Dorsolateral prefrontal cortex (tissue), 120 donors: ENCODE measurements at regions of chr6 and their contacts with region 1.

Region 1: GRCh38 chr6:110389689-110390382 is 25.5 kb downstream of the DDO start:
- DNase-seq: no peak
- H3K4me3 ChIP-seq: no peak overlapping the region
- H3K27ac ChIP-seq: peak overlapping the region in 7 of 59 donors; percentile 1 to 68 (median 47)
- H3K27me3 ChIP-seq: no peaks in the 10 kb centered on the region
- CTCF ChIP-seq: no peak

Region 2: DNA sequence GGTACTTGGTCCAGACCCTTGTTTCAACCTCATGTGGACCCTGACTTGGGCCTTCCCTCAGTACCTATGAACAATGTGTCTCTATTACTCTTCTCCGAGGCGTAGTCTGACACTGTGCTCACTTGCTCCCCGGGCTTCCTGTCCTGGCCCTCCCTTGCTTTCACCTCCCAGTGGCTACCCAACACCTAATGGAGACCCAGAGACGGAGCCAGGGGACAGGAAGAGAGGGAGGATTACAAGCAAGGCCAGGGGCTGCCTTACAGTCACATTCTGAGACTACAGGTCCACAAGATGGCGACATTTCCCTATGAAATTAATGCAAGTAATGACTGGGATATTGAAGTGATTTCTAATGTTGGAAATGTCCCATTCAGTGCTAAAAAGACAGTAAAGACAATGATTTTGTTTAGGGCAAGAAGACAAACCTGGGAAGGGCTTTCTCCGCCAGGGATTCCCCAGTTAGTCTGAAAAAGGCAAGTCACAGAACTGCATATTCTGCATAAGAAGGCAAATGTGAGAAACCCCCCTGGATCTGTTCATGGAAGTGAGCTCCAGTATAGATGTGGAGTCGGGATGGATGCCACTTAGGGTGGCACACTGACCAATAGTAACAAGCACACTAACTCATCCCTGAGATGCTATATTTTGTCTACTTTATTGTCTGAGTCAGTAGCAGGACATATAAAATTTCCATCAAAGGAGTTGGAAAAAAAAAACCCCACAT is 862.8 kb before region 1 on chr6:
- intact Hi-C with region 1: loop called in 1 of 2 experiments (anchors 5 kb)
- DNase-seq: peak in 4 of 10 donors; percentile 12 to 40 (median 18)
- H3K4me3 ChIP-seq: no peak overlapping the region
- H3K27ac ChIP-seq: no peak overlapping the region
- H3K27me3 ChIP-seq: no peaks in the 10 kb centered on the region
- CTCF ChIP-seq: peak in 54 of 56 donors; percentile 29 to 75 (median 60)

Region 3: GRCh38 chr6:109705258-109705657 is 684.6 kb before region 1 on chr6:
- intact Hi-C with region 1: loop called (anchors 5 kb)
- DNase-seq: peak; percentile 70 to 84 (median 80)
- H3K4me3 ChIP-seq: no peak overlapping the region
- H3K27ac ChIP-seq: peak overlapping the region in 14 of 59 donors; percentile 5 to 85 (median 34)
- H3K27me3 ChIP-seq: no peaks in the 10 kb centered on the region
- CTCF ChIP-seq: peak; percentile 98 to 100 (median 100)

Region 4: GRCh38 chr6:109783250-109783986 is 606.4 kb before region 1 on chr6:
- intact Hi-C with region 1: no loop called
- DNase-seq: no peak
- H3K4me3 ChIP-seq: no peak overlapping the region
- H3K27ac ChIP-seq: no peak overlapping the region
- H3K27me3 ChIP-seq: no peaks in the 10 kb centered on the region
- CTCF ChIP-seq: peak in 1 of 56 donors; percentile 6

Region 5: DNA sequence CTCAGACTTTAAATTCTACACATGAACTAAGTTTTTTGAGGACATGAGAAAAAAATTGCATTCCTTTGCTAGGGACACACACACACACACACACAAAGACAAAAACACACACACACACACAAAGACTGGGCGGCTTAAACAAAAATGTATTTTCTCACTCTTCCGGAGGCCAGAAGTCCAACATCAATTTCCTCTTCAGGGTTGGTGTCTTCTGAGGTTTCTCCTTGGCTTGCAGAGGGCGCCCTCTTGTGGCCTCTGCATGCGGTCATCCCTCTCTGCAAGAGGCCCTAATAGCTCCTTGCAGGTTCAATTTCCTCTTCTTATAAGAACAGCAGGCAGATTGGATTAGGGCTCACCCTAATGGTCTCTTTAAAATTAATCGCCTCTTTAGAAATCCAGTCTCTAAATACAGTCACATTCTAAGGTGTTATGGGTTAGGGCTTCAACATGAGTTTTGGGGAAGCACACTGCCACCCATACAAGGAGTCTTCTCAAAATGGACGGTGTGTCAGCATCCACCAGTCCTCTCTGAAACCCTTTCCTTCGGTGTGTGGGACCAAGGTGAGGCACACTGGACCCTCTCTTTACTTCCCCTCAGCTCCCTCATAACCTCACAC is 350.4 kb before region 1 on chr6:
- intact Hi-C with region 1: loop called in 1 of 2 experiments (anchors 5 kb)
- DNase-seq: peak; percentile 81 to 92 (median 86)
- H3K4me3 ChIP-seq: peak overlapping the region in 40 of 59 donors; percentile 2 to 53 (median 26)
- H3K27ac ChIP-seq: peak overlapping the region in 39 of 59 donors; percentile 3 to 80 (median 56)
- H3K27me3 ChIP-seq: no peaks in the 10 kb centered on the region
- CTCF ChIP-seq: peak; percentile 67 to 96 (median 90)

Region 6: DNA sequence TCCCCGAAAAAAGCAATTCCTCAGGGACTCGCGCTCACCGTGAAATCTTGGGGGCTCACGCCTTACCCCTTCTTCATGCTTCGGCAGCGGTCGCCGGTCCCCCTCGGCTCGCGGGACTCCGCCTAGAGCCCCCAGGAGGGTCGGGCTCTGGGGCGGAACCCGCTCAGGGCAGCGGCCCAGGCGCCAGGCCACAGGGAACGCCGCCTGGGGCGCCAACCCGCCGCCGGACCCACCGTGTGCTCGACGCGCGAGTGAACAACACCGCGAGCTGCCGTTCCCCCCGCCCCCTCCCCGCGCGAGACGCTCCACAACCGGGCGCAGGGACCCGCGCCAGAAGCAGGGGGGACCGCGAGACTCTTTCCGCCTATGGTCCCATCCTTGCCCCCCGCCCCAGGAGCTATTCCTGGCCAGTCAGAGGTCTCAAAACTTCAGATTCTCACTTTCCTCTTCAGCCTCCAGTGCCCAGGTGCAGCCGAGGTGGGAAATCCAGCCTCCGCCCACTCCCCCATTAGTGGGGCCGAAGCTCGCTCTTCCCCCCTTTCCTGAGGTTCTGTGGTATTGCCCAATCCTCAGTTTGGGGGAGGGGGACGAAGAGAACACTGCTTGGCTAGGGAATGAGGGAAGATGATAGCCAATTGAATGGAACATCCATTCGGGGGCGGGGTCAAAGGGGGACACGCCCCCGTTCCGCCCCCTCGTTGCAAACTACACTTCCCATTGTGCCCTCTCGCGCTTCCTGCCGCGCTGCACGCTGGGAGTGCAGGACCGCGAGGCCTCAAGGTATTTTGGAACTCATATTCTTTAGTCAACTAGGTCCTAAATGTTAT is 210.2 kb before region 1 on chr6 and contains the start of gene WASF1:
- intact Hi-C with region 1: loop called (anchors 2 kb)
- DNase-seq: peak; percentile 94 to 97 (median 96)
- H3K4me3 ChIP-seq: peak within 1 kb of the TSS; percentile 49 to 100 (median 90)
- H3K27ac ChIP-seq: peak within 1 kb of the TSS; percentile 73 to 94 (median 88)
- H3K27me3 ChIP-seq: no peaks in the 10 kb centered on the region
- CTCF ChIP-seq: peak in 21 of 56 donors; percentile 2 to 52 (median 29)
- total RNA-seq, gene WASF1: 44.7 to 218 (median 145) TPM